IMR-90 (cell line): ENCODE measurements at regions of chr18 and their contacts with region 1.

Region 1: DNA sequence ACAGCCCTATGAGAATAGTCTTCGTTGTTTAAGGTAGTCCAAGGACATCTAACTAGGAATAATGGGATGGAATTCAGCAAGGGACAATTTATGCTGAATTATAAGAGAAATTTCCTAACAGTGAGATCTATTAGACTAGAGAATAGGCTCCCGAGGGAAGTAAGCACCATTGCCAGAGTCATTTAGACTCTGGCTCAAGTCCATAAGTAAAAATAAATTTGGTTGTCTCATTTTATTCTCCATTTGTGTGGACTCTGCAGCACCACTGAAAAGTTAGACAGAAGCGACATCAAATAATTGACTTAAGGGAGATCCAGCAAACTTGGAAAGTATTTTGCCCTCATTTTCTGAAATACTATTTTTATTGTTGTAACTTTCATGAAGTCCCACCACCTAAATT is 129.3 kb upstream of the SMIM21 start:
- DNase-seq: no peak
- ATAC-seq: no peak
- H3K4me3 ChIP-seq: no peak overlapping the region
- H3K27ac ChIP-seq: no peak overlapping the region
- H3K4me1 ChIP-seq: no peaks in the 10 kb centered on the region
- H3K27me3 ChIP-seq: peaks cover 2% of the 10 kb centered on the region
- CTCF ChIP-seq: no peak
- POLR2A ChIP-seq: no peak
- RAD21 ChIP-seq: no peak

Region 2: DNA sequence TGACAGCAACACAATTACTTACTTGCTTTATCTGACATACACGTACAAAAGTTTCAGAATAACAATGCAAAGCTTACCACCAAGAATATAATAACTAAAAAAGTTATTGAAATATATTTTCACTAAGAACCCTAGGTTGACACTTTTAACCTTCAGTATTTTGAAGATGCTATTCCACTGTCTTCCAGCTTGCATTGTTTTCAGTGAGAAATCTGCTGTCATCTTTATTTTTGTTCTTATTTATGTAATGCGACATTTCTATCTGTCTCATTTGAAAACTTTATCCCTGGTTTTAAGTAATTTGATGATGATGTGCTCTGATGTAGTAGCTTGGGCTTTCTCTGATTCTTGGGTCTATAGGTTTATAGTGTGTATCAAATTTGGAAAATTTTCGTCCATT is 35.7 kb after region 1 on chr18:
- CTCF ChIA-PET with region 1: no interaction called
- POLR2A ChIA-PET with region 1: no interaction called
- dilution Hi-C with region 1: no loop called
- in situ Hi-C with region 1: no loop called
- intact Hi-C with region 1: loop called (anchors 1 kb)
- DNase-seq: no peak
- ATAC-seq: no peak
- H3K4me3 ChIP-seq: no peak overlapping the region
- H3K27ac ChIP-seq: no peak overlapping the region
- H3K4me1 ChIP-seq: no peaks in the 10 kb centered on the region
- H3K27me3 ChIP-seq: no peaks in the 10 kb centered on the region
- CTCF ChIP-seq: no peak
- POLR2A ChIP-seq: no peak
- RAD21 ChIP-seq: no peak